ENCODE measurements at regions of chr7 and their contacts with region 1.

Region 1: GRCh38 chr7:95199779-95200558 is 124.4 kb downstream of the PON1 start:
- DNase-seq: peak in 1 of 2 donors; percentile 15
- ATAC-seq: peak in 6 of 8 donors; percentile 61 to 83 (median 78)
- H3K4me3 ChIP-seq: no peak overlapping the region
- H3K27ac ChIP-seq: no peak overlapping the region
- H3K4me1 ChIP-seq: peaks cover 0 to 4% (median 0%) of the 10 kb centered on the region in 9 donors
- H3K27me3 ChIP-seq: no peaks in the 10 kb centered on the region
- CTCF ChIP-seq: peak; percentile 30 to 81 (median 67)

Region 2: GRCh38 chr7:94466516-94466915 is 733.5 kb before region 1 on chr7:
- intact Hi-C with region 1: loop called in 1 of 10 experiments (anchors 10 kb)
- DNase-seq: no peak
- ATAC-seq: no peak
- H3K4me3 ChIP-seq: no peak overlapping the region
- H3K27ac ChIP-seq: no peak overlapping the region
- H3K4me1 ChIP-seq: no peaks in the 10 kb centered on the region
- H3K27me3 ChIP-seq: no peaks in the 10 kb centered on the region
- CTCF ChIP-seq: no peak

Region 3: DNA sequence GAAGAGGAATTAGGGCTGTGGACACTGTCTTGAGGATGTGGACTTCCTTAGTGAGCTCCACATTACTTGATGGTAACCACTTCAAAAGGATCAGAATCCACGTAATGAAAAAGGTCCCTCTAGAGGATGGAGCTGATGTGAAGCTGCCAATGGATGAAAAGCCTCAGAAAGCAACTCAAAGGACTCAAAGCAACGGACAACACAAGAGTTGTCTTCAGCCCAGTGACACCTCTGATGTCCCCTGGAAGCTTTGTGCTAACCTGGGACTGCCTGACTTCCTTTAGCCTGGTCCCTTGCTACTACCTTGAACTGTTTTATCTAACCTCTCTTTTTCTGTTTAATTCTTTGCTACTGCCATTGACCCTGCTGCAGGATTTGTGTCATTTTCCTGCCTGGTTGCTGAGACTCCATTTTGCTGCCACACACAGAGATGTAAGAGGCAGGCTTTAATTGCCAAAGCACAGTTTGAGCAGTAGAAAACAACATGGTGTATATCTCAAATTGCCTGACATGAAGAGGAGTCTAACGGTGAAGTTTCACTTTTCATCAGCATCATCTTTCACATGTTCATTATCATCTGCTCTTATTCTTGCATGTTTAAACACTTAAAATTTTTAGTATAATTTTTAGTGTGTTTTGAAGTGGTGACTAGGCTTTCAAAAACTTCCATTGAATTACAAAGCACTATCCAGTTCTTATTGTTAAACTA is 532.9 kb before region 1 on chr7:
- intact Hi-C with region 1: loop called in 1 of 10 experiments (anchors 10 kb)
- DNase-seq: no peak
- ATAC-seq: no peak
- H3K4me3 ChIP-seq: no peak overlapping the region
- H3K27ac ChIP-seq: no peak overlapping the region
- H3K4me1 ChIP-seq: no peaks in the 10 kb centered on the region
- H3K27me3 ChIP-seq: no peaks in the 10 kb centered on the region
- CTCF ChIP-seq: no peak

Region 4: DNA sequence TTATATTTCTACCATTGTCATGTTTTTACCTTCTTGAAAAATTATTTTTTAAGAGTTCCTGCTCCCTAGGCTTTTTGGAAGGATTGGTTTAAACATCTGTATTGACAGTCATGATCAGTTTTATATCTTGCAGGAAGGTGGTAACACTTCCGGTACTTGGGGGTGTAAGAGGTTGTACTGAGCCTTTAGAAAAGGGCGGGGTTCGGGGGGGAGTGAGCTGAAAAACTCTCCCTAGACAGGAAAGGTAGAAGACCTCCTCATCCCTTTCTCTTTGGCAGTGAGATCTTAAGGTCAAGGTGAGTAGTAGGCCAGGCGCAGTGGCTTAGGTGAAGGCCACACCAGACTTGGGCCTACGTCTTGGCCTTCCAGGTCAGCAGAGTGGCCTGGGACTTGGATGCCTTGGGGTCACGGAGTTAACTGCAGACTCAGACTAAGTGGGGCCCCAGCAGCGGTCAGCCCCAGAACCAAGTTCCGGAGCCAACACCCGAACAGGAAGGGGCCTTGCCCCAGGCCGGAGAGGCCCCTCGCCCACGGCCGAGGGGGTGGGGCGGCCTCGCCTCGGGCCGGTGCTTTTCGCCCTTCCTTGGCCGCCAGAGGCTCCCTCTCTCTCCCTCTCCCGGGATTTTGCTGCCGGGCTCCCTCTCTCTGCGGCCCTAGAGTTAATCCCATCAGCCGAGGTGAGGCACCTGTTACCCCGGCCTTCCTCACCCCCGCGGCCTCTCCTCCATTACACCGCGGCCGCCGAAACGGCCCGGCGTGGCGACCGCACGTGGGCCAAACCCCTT is 292.8 kb before region 1 on chr7 and contains the start of gene PPP1R9A:
- intact Hi-C with region 1: loop called in 1 of 10 experiments (anchors 10 kb)
- DNase-seq: peak; percentile 37 to 45
- ATAC-seq: peak; percentile 63 to 91 (median 84)
- H3K4me3 ChIP-seq: peak within 1 kb of the TSS; percentile 11 to 70 (median 60)
- H3K27ac ChIP-seq: peak within 1 kb of the TSS; percentile 26 to 83 (median 72)
- H3K4me1 ChIP-seq: peaks cover 0 to 17% (median 10%) of the 10 kb centered on the region in 9 donors
- H3K27me3 ChIP-seq: peaks cover 0 to 41% (median 5%) of the 10 kb centered on the region in 7 donors
- CTCF ChIP-seq: peak in 8 of 9 donors; percentile 9 to 59 (median 32)
- total RNA-seq, gene PPP1R9A: 19.1 to 41.9 (median 33.3) TPM

Region 5: DNA sequence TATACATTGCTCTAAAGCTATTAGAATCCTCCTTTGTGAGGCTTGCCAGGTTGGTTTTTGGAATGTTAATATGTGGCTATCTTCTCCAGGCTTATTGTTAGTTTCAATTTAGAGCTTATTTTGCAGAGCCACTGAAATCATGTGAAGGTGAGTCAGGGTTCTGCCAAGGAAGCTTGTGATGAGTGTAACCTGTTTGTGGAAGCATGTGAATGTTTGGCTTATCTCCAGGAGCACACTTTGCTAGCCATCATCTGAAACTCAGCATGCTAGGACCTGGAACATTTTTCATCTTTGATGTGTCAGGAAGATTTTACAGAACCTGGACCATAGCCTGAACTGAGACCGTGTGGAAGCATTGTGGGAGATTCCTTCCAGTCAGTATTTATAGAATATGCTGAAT is 95.2 kb before region 1 on chr7:
- intact Hi-C with region 1: no loop called
- DNase-seq: no peak
- ATAC-seq: no peak
- H3K4me3 ChIP-seq: no peak overlapping the region
- H3K27ac ChIP-seq: no peak overlapping the region
- H3K4me1 ChIP-seq: peaks cover 0 to 13% (median 4%) of the 10 kb centered on the region in 9 donors
- H3K27me3 ChIP-seq: no peaks in the 10 kb centered on the region
- CTCF ChIP-seq: no peak